AG04450 (cell line): ENCODE measurements at regions of chr11 and their contacts with region 1.

Region 1: GRCh38 chr11:15819679-15820286 is 536.6 kb downstream of the SOX6 start:
- DNase-seq: no peak
- H3K4me3 ChIP-seq: no peak overlapping the region
- H3K27ac ChIP-seq: no peak overlapping the region
- H3K27me3 ChIP-seq: no peaks in the 10 kb centered on the region
- CTCF ChIP-seq: peak; percentile 74

Region 2: DNA sequence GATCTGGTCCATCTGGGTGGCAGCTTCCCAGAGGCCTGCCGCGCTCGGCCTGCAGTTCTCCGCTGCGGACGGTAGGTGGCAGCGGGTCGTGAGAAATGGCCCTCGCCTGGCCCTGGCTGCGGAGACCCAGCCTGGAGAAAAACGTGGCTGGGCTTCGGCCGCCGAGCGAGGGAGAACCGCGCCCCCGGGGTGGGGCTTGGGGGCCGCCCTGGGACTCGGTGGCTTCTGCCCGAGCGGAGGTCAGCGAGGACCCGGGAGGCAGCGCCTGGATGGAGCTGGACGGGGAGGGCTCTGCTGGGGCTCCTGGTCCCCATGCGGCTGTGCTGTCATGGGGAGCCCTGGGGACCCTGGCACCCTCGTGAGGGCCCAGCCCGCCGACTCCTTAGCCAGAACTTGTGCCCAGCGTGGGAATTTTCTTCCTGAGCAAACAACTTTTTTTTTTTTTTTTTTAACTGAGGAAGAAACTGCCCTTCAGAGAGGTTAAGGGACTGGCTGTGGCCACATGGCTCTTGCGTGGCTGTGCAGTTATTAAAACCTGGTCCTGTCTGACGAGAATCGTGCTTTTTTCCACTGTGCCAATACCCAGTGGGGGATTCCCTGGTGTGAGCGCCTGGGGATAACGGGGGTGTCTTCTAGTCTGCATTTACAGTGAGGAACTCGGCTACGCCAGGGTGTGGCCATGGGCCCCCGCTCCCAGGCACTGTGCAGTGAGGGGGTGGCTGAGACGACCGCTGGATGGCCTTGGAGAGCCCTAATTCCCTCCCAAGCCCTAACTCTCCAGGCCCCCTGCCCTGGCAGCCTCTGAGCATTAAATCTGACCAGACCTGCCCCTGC is 169.5 kb before region 1 on chr11:
- CTCF ChIA-PET with region 1: interaction called, 11 read pairs
- POLR2A ChIA-PET with region 1: no interaction called
- DNase-seq: peak; percentile 82
- H3K4me3 ChIP-seq: peak overlapping the region; percentile 59
- H3K27ac ChIP-seq: peak overlapping the region; percentile 31
- H3K27me3 ChIP-seq: no peaks in the 10 kb centered on the region
- CTCF ChIP-seq: peak; percentile 95

Region 3: GRCh38 chr11:16154715-16155396 is 335.1 kb after region 1 on chr11:
- CTCF ChIA-PET with region 1: no interaction called
- POLR2A ChIA-PET with region 1: no interaction called
- DNase-seq: no peak
- H3K4me3 ChIP-seq: no peak overlapping the region
- H3K27ac ChIP-seq: no peak overlapping the region
- H3K27me3 ChIP-seq: no peaks in the 10 kb centered on the region
- CTCF ChIP-seq: no peak